ENCODE measurements at regions of chr12 and their contacts with region 1.

Region 1: GRCh38 chr12:56724972-56725722 is at the start of gene NACA:
- DNase-seq: peak; percentile 99
- H3K4me3 ChIP-seq: peak within 1 kb of the TSS; percentile 85 to 90 (median 86)
- H3K27ac ChIP-seq: peak within 1 kb of the TSS; percentile 61
- H3K4me1 ChIP-seq: peaks cover 33% of the 10 kb centered on the region
- H3K27me3 ChIP-seq: no peaks in the 10 kb centered on the region
- CTCF ChIP-seq: no peak
- POLR2A ChIP-seq: peak; percentile 91
- total RNA-seq, gene NACA: 886 and 892 TPM in 2 replicates

Region 2: DNA sequence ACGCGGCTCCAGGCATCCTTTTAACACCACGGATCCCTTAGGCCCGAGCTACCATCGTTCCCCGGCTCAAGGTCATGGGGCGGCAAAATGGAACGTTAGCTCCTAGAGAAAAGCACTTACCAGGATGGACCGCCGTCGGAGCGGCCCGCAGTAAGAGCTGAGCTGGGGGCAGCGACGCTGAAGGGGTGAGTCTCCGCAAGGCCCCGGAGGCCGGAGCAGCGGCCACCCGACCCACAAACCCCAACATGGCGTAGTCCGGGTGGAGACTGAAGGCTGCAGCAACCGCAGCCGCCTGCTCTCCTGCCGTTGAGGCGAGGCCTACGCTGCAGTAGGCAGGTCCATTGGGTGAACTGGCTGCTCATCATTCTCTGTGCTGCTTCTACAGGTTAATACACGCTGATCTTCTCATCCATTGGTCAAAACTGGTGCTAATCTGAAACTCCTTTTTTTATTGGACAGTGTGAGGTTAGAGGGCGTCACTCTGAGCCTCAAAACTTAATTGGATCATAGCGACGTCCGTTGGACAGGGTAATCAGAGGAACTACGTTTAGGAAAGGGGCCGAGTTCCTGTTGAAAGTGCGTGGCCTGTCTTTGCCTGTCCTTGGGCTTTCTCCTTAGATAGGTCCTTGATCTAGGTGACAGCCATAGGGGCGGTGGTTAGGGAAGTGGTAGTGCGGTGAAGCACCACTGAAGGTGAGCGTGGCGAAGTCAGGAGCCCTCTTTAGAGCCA is 79.3 kb before region 1 on chr12 and contains the start of gene ATP5F1B:
- CTCF ChIA-PET with region 1: no interaction called
- POLR2A ChIA-PET with region 1: interaction called, 9 read pairs
- dilution Hi-C with region 1: no loop called
- intact Hi-C with region 1: loop called (anchors 1 kb)
- DNase-seq: peak; percentile 100
- H3K4me3 ChIP-seq: peak within 1 kb of the TSS; percentile 72 to 86 (median 84)
- H3K27ac ChIP-seq: peak within 1 kb of the TSS; percentile 50
- H3K4me1 ChIP-seq: peaks cover 15% of the 10 kb centered on the region
- H3K27me3 ChIP-seq: no peaks in the 10 kb centered on the region
- CTCF ChIP-seq: no peak
- POLR2A ChIP-seq: peak; percentile 99
- total RNA-seq, gene ATP5F1B: 520 and 590 TPM in 2 replicates

Region 3: GRCh38 chr12:56688129-56688845 is 36.9 kb before region 1 on chr12 and contains the start of gene PTGES3:
- CTCF ChIA-PET with region 1: interaction called, 4 read pairs
- POLR2A ChIA-PET with region 1: interaction called, 6 read pairs
- dilution Hi-C with region 1: no loop called
- intact Hi-C with region 1: loop called (anchors 1 kb)
- DNase-seq: peak; percentile 99
- H3K4me3 ChIP-seq: peak within 1 kb of the TSS; percentile 61 to 91 (median 84)
- H3K27ac ChIP-seq: peak within 1 kb of the TSS; percentile 90
- H3K4me1 ChIP-seq: peaks cover 27% of the 10 kb centered on the region
- H3K27me3 ChIP-seq: no peaks in the 10 kb centered on the region
- CTCF ChIP-seq: peak in 1 of 2 donors; percentile 3
- POLR2A ChIP-seq: peak; percentile 88
- total RNA-seq, gene PTGES3: 262 and 278 TPM in 2 replicates

Region 4: GRCh38 chr12:56775638-56776037 is 50.5 kb after region 1 on chr12:
- CTCF ChIA-PET with region 1: no interaction called
- POLR2A ChIA-PET with region 1: no interaction called
- dilution Hi-C with region 1: no loop called
- intact Hi-C with region 1: no loop called
- DNase-seq: no peak
- H3K4me3 ChIP-seq: no peak overlapping the region
- H3K27ac ChIP-seq: no peak overlapping the region
- H3K4me1 ChIP-seq: no peaks in the 10 kb centered on the region
- H3K27me3 ChIP-seq: peaks cover 0 to 3% of the 10 kb centered on the region in 2 experiments
- CTCF ChIP-seq: no peak
- POLR2A ChIP-seq: no peak

Measured in endothelial cell of umbilical vein (primary cell).